HEK293 (cell line): ENCODE measurements at regions of chr6 and their contacts with region 1.

Region 1: DNA sequence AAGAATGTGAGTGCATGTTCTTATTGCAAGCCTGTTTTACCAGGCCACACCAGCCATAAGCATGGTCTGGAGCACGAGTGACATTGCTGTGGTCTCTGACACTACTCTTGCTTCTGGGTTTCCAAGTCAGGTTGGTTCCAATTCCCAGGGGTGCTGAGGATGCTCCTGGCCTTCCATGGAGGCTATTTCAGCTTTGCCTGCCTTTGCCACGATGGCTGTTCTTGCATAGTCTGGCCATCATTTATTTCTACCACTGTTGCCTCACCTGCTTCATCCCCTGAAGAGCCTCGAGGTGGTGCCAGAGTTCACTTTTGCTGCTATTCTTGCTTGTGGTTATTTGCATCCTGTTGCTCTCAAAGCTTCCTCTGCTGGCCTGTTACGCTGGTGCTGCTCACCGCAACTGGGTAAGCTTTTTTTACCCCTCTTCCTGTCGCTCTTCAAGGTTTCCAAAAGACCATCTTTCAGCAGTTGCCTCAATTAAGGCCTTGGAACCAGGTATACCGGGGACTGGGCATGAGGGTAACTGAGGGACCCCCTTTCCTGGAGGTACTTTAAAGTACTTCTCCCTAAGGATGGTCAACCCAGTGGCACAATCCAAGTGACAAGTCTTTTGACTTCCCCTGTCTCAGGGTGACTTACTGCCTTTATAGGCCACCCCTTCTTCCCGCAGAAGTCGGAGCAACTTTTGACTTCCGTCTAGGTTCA is 64.5 kb downstream of the AKAP7 start:
- H3K4me3 ChIP-seq: no peak overlapping the region
- H3K27ac ChIP-seq: no peak overlapping the region
- H3K4me1 ChIP-seq: no peaks in the 10 kb centered on the region
- CTCF ChIP-seq: no peak; the same call in 1 of the 2 replicates

Region 2: DNA sequence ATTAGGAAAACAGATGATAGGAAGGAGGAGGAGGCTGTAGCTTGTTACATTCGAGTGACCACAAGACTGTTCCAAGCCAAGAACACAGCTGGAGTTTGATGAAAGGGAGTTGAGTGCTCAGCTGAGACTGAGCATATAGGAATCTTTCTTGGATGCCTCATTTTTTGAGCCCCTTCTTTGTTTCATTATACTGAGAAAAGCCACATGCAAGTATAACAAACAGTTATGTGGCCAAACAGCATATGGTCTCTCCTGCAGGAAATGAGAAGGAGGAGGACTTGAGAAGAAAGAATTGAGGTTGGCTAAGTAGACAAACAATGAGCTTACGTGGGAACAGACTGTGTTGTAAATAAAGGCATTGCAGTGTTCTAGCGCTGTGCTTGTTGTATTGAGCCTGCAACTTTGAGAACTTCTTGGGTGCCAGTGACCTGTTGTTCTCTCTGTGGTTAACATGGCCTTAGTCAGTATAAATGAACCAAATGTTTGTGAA is 13.8 kb after region 1 on chr6:
- CTCF ChIA-PET with region 1: interaction called, 12 read pairs
- POLR2A ChIA-PET with region 1: no interaction called
- H3K4me3 ChIP-seq: no peak overlapping the region
- H3K27ac ChIP-seq: no peak overlapping the region
- H3K4me1 ChIP-seq: no peaks in the 10 kb centered on the region
- CTCF ChIP-seq: no peak

Region 3: GRCh38 chr6:131460614-131461000 is 260.9 kb after region 1 on chr6:
- CTCF ChIA-PET with region 1: interaction called, 12 read pairs
- POLR2A ChIA-PET with region 1: no interaction called
- H3K4me3 ChIP-seq: no peak overlapping the region
- H3K27ac ChIP-seq: no peak overlapping the region
- H3K4me1 ChIP-seq: no peaks in the 10 kb centered on the region
- CTCF ChIP-seq: no peak